ENCODE measurements at regions of chr21 and their contacts with region 1.

Region 1: GRCh38 chr21:32604464-32604863 is 7.7 kb downstream of the CFAP298 start:
- DNase-seq: no peak
- ATAC-seq: no peak

Region 2: DNA sequence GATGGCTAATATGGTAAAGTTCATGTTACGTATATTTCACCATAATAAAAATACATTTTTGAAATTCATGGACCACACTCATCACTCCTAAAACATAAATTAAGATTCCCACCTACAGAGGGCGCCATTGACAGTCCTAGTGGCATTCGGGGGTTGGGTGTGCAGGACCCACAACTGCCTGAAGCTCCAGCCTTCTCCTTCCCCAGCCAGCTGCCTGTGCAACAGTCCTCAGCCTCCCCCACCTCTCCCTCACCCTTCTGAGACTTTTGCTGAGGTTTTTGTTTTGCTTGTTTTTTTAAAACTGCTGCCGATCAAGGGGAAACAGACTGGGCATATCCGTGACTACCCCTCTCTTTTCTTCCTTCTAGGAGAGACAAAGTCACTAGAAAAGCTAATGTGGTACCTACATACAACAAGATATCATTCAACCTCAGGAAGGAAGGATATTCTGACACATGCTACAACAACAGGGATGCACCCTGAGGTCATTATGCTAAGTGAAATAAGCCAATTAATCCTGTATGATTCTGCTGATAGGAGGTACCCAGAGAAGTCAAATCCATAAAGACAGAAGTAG is 201.2 kb before region 1 on chr21:
- intact Hi-C with region 1: loop called in 1 of 2 experiments (anchors 10 kb)
- DNase-seq: peak; percentile 47 to 55
- ATAC-seq: peak; percentile 65

Region 3: DNA sequence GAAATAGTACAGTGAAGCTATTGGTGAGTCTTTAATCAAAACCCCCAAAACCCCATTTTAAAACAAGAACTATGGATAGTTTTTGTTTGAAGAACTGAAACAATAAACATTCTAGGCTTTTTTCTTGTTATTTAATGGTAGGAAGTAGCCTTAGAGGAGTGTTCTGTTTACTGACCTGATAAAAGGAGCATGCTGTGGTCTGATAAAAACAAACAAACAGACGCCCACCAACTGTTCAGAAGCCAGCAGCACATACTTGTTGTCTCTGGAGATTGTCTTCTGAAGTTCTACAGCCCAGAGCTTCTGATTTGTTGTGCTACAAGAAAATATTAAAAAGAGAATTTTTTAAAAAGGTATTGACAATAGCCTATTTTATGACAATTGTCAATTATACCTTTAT is 61.8 kb after region 1 on chr21:
- intact Hi-C with region 1: no loop called
- DNase-seq: no peak
- ATAC-seq: no peak

Measured in left colon (tissue), 2 donors.